A549 (cell line): ENCODE measurements at regions of chr5 and their contacts with region 1.

Region 1: GRCh38 chr5:153964880-153965645 is 73.6 kb downstream of the FAM114A2 start:
- DNase-seq: peak; percentile 59 to 83
- ATAC-seq: peak; percentile 75 to 93
- H3K4me3 ChIP-seq: no peak overlapping the region
- H3K27ac ChIP-seq: no peak overlapping the region
- H3K4me1 ChIP-seq: no peaks in the 10 kb centered on the region
- CTCF ChIP-seq: peak; percentile 95
- EP300 ChIP-seq: no peak
- POLR2A ChIP-seq: no peak
- RAD21 ChIP-seq: peak; percentile 96 to 97

Region 2: DNA sequence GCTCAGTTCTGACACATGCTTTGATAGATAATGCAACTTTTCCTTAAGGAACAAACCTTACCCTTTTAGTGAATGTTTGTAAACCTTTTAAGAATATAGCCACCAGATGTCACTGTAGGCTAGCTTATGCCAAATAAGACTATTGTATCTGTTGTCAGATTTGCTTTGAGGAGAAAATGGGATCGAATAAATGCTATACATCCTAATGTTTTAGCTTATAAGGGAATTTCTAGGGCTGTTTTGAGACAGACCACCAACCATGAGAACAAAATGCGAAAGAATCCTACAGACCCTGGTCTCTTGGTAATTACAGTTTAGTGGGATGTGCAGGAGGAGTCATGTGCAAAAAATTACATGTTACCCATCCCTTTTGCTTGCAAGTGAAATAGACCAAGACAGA is 1432.3 kb before region 1 on chr5:
- CTCF ChIA-PET with region 1: interaction called, 102 read pairs
- POLR2A ChIA-PET with region 1: no interaction called
- DNase-seq: peak; percentile 28 to 66
- ATAC-seq: peak; percentile 81 to 85
- H3K4me3 ChIP-seq: no peak overlapping the region
- H3K27ac ChIP-seq: no peak overlapping the region
- H3K4me1 ChIP-seq: no peaks in the 10 kb centered on the region
- CTCF ChIP-seq: peak; percentile 67
- EP300 ChIP-seq: no peak
- POLR2A ChIP-seq: no peak
- RAD21 ChIP-seq: peak; percentile 82 to 86

Region 3: GRCh38 chr5:152560512-152561137 is 1404.4 kb before region 1 on chr5:
- CTCF ChIA-PET with region 1: interaction called, 23 read pairs
- POLR2A ChIA-PET with region 1: no interaction called
- DNase-seq: peak; percentile 4 to 59
- ATAC-seq: peak; percentile 50 to 88; a peak in 5 of 6 replicates
- H3K4me3 ChIP-seq: no peak overlapping the region
- H3K27ac ChIP-seq: no peak overlapping the region
- H3K4me1 ChIP-seq: no peaks in the 10 kb centered on the region
- CTCF ChIP-seq: peak; percentile 53
- EP300 ChIP-seq: no peak
- POLR2A ChIP-seq: no peak
- RAD21 ChIP-seq: peak; percentile 54 to 74; a peak in 4 of 5 replicates

Region 4: GRCh38 chr5:153496835-153497234 is 468.2 kb before region 1 on chr5:
- CTCF ChIA-PET with region 1: interaction called, 36 read pairs
- POLR2A ChIA-PET with region 1: no interaction called
- DNase-seq: peak in 1 of 2 experiments; percentile 7
- ATAC-seq: peak; percentile 64 to 66; a peak in 4 of 6 replicates
- H3K4me3 ChIP-seq: no peak overlapping the region
- H3K27ac ChIP-seq: no peak overlapping the region
- H3K4me1 ChIP-seq: no peaks in the 10 kb centered on the region
- CTCF ChIP-seq: peak; percentile 55
- EP300 ChIP-seq: no peak
- POLR2A ChIP-seq: no peak
- RAD21 ChIP-seq: peak; percentile 63 to 75

Region 5: GRCh38 chr5:153981905-153982605 is 17.0 kb after region 1 on chr5:
- CTCF ChIA-PET with region 1: interaction called, 60 read pairs
- POLR2A ChIA-PET with region 1: no interaction called
- DNase-seq: no peak
- ATAC-seq: no peak
- H3K4me3 ChIP-seq: no peak overlapping the region
- H3K27ac ChIP-seq: no peak overlapping the region
- H3K4me1 ChIP-seq: no peaks in the 10 kb centered on the region
- CTCF ChIP-seq: no peak
- EP300 ChIP-seq: no peak
- POLR2A ChIP-seq: no peak
- RAD21 ChIP-seq: no peak